ENCODE measurements at regions of chr22 and their contacts with region 1.

Region 1: DNA sequence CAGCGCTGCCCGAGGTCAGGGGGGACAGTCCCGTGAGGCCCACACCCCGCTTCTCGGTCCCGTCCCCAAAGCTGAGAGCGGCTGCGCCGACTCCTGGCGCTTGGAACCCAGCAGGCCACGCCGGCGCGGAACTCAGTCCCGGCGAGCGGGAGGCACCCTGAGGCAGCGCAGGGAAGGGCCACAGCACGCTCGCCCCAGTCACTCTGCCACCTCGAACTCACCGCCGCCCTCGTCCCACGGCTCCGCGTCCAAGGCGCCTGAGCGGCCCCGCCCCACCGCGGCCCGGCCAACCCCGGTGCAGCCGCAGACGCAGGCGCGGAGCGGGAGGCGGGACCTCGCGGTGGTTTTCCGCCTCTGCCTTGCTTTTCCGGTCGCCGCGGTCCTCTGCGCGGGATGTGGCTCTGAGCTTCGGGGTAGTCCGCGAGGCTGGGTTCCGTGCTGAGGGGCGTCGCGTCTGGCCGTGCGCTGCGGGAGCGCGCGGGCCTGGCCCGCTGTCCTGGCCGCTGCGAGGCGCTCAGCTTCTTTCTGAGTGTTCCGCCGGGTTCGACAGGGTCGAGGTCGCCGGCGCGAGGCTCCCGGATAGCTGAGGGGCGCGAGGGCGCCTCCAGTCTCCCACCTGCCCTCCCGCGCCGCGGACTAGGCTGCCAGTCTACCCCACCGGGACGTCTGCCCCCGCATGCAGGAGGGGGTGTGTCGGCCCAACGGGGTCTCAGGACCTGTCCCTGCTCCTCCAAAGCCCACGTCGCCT is at the start of gene CDPF1:
- DNase-seq: peak; percentile 86
- ATAC-seq: peak; percentile 86 to 87
- H3K4me3 ChIP-seq: peak within 1 kb of the TSS; percentile 85 to 96 (median 87)
- H3K27ac ChIP-seq: peak within 1 kb of the TSS; percentile 91 to 96 (median 94)
- H3K4me1 ChIP-seq: peaks cover 17 to 28% of the 10 kb centered on the region in 2 donors
- H3K27me3 ChIP-seq: no peaks in the 10 kb centered on the region
- CTCF ChIP-seq: peak in 1 of 5 experiments; percentile 12
- POLR2A ChIP-seq: peak; percentile 89 to 90
- total RNA-seq, gene CDPF1: 6.3 to 18.8 (median 12.5) TPM

Region 2: GRCh38 chr22:45948081-45948648 is 302.0 kb before region 1 on chr22:
- in situ Hi-C with region 1: no loop called
- intact Hi-C with region 1: no loop called
- DNase-seq: no peak
- ATAC-seq: no peak
- H3K4me3 ChIP-seq: no peak overlapping the region
- H3K27ac ChIP-seq: no peak overlapping the region
- H3K4me1 ChIP-seq: peaks cover 0 to 14% of the 10 kb centered on the region in 2 donors
- H3K27me3 ChIP-seq: peaks cover 9 to 29% (median 21%) of the 10 kb centered on the region in 3 donors
- CTCF ChIP-seq: no peak
- POLR2A ChIP-seq: no peak

Region 3: DNA sequence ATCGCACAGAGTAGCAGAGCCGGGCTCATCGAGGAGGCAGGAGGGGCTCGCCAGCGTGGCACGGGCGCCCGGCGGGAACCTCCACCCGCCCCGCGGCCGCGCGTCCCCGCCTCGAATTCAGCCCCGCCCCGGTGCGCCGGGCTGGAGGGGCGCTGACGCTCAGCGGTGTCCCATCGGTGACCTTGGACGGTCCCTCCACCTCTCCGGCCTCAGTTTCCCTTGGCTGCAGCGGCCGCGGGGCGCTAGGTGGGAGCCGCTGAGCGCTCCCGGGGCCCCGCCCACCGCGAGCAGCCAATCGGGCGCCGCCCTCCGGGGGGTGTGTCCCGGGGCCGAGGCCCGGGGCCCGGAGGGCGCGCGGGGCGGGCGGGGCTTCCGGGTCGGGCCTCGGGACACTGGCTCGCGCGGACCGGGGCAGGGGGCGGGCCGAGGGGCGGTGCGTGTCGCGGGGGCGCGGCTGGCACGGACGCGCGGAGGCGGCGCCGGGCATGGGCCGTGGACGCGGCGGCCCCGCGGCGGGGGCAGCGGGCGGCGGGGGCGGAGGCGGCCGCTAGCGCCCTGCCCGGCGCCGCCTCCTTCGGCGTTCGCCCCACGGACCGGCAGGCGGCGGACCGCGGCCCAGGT is 100.1 kb before region 1 on chr22 and contains the start of gene PPARA:
- in situ Hi-C with region 1: no loop called
- intact Hi-C with region 1: loop called (anchors 2 kb)
- DNase-seq: peak; percentile 85 to 90
- ATAC-seq: peak; percentile 75 to 81
- H3K4me3 ChIP-seq: peak within 1 kb of the TSS; percentile 83 to 92 (median 86)
- H3K27ac ChIP-seq: peak within 1 kb of the TSS; percentile 96 to 98 (median 98)
- H3K4me1 ChIP-seq: peaks cover 35 to 40% of the 10 kb centered on the region in 2 donors
- H3K27me3 ChIP-seq: no peaks in the 10 kb centered on the region
- CTCF ChIP-seq: no peak
- POLR2A ChIP-seq: peak; percentile 83 to 84
- total RNA-seq, gene PPARA: 29.6 to 74.8 (median 57.9) TPM

Region 4: GRCh38 chr22:46196278-46196677 is 53.9 kb before region 1 on chr22:
- in situ Hi-C with region 1: no loop called
- intact Hi-C with region 1: loop called (anchors 5 kb)
- DNase-seq: peak; percentile 79 to 86
- ATAC-seq: peak; percentile 93 to 94
- H3K4me3 ChIP-seq: peak overlapping the region in 1 of 4 donors; percentile 5
- H3K27ac ChIP-seq: peak overlapping the region; percentile 76 to 93 (median 84)
- H3K4me1 ChIP-seq: peaks cover 20 to 31% of the 10 kb centered on the region in 2 donors
- H3K27me3 ChIP-seq: no peaks in the 10 kb centered on the region
- CTCF ChIP-seq: no peak
- POLR2A ChIP-seq: no peak

Region 5: GRCh38 chr22:46267431-46268279 is 17.4 kb after region 1 on chr22 and contains the start of gene TTC38:
- in situ Hi-C with region 1: no loop called
- intact Hi-C with region 1: loop called (anchors 1 kb)
- DNase-seq: peak; percentile 90 to 96
- ATAC-seq: peak; percentile 95 to 96
- H3K4me3 ChIP-seq: peak within 1 kb of the TSS; percentile 75 to 99 (median 80)
- H3K27ac ChIP-seq: peak within 1 kb of the TSS; percentile 89 to 97 (median 92)
- H3K4me1 ChIP-seq: peaks cover 10 to 20% of the 10 kb centered on the region in 2 donors
- H3K27me3 ChIP-seq: no peaks in the 10 kb centered on the region
- CTCF ChIP-seq: no peak
- POLR2A ChIP-seq: peak; percentile 62 to 71
- total RNA-seq, gene TTC38: 30.4 to 58.3 (median 43.1) TPM

Region 6: GRCh38 chr22:46564084-46564759 is 314.0 kb after region 1 on chr22:
- in situ Hi-C with region 1: no loop called
- intact Hi-C with region 1: no loop called
- DNase-seq: no peak
- ATAC-seq: peak; percentile 5 to 25
- H3K4me3 ChIP-seq: no peak overlapping the region
- H3K27ac ChIP-seq: peak overlapping the region in 3 of 4 donors; percentile 22 to 52 (median 26)
- H3K4me1 ChIP-seq: peaks cover 5 to 6% of the 10 kb centered on the region in 2 donors
- H3K27me3 ChIP-seq: no peaks in the 10 kb centered on the region
- CTCF ChIP-seq: no peak
- POLR2A ChIP-seq: no peak

Measured in gastrocnemius medialis (tissue), 4 donors.